ENCODE measurements at regions of chr16 and their contacts with region 1.

Region 1: DNA sequence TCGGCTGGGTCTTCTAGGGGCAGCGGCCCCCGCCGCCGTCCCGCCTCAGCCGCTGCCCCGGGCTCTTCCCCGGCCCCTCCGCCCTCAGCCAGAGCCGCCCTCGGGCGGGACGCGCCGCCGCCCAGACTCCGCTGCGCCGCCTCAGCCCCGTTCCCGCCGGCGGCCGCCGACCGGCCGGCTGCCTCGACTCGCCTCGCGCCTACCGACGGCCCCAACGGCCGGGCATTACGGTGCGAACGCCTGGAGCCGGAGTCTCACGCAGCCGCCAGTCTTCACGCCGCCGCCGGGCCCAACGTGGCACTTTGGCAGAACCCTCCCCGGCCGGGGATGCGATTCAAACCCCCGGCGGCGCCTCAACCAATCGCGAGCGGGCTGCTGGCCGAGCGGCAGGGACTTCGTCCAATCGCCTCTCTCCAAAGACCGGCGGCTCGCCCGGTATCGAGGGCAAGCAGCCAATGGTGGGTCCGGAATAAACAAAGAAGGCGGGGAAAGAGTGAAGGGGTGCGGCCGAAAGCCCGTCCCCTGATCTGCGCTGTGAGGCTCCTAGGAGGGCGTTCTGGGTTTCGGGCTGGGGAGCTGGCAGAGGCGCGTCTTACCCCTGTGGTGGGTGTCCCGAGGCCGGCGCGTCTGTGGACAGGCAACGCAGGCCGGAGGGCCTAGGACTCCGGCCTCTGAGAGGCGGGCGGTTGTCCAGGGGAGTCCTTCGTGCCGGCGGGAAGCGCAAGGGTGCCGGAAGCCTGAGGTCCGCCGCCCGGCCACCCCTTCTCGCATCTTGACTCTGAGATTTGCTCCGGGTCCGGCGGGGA is at the start of gene CDR2:
- DNase-seq: peak; percentile 92 to 99 (median 96)
- H3K4me3 ChIP-seq: peak within 1 kb of the TSS; percentile 54 to 97 (median 84)
- H3K27ac ChIP-seq: peak within 1 kb of the TSS in 21 of 59 donors; percentile 7 to 88 (median 42)
- H3K27me3 ChIP-seq: no peaks in the 10 kb centered on the region
- CTCF ChIP-seq: peak in 18 of 56 donors; percentile 6 to 46 (median 27)
- total RNA-seq, gene CDR2: 7.3 to 37.6 (median 23.1) TPM

Region 2: GRCh38 chr16:22297114-22297878 is 77.2 kb before region 1 on chr16 and contains the start of gene POLR3E:
- intact Hi-C with region 1: loop called in 1 of 2 experiments (anchors 5 kb)
- DNase-seq: peak; percentile 98 to 99 (median 98)
- H3K4me3 ChIP-seq: peak within 1 kb of the TSS; percentile 55 to 98 (median 89)
- H3K27ac ChIP-seq: peak within 1 kb of the TSS; percentile 66 to 97 (median 91)
- H3K27me3 ChIP-seq: no peaks in the 10 kb centered on the region
- CTCF ChIP-seq: peak; percentile 84 to 100 (median 96)
- total RNA-seq, gene POLR3E: 29.2 to 66.1 (median 45.5) TPM

Region 3: GRCh38 chr16:22321339-22322001 is 53.0 kb before region 1 on chr16:
- intact Hi-C with region 1: loop called in 1 of 2 experiments (anchors 5 kb)
- DNase-seq: peak; percentile 47 to 83 (median 74)
- H3K4me3 ChIP-seq: no peak overlapping the region
- H3K27ac ChIP-seq: peak overlapping the region in 4 of 59 donors; percentile 27 to 66 (median 35)
- H3K27me3 ChIP-seq: no peaks in the 10 kb centered on the region
- CTCF ChIP-seq: peak; percentile 65 to 94 (median 87)